Common myeloid progenitor, CD34-positive (primary cell): ENCODE measurements at regions of chr1 and their contacts with region 1.

Region 1: GRCh38 chr1:201895913-201896807 is 7.5 kb downstream of the SHISA4 start:
- DNase-seq: peak; percentile 89 to 93 (median 92)
- H3K4me3 ChIP-seq: peak overlapping the region in 1 of 7 experiments; percentile 60
- H3K27ac ChIP-seq: no peak overlapping the region
- H3K4me1 ChIP-seq: peaks cover 0 to 3% (median 0%) of the 10 kb centered on the region in 4 experiments
- H3K27me3 ChIP-seq: peaks cover 0 to 10% (median 2%) of the 10 kb centered on the region in 5 experiments

Region 2: DNA sequence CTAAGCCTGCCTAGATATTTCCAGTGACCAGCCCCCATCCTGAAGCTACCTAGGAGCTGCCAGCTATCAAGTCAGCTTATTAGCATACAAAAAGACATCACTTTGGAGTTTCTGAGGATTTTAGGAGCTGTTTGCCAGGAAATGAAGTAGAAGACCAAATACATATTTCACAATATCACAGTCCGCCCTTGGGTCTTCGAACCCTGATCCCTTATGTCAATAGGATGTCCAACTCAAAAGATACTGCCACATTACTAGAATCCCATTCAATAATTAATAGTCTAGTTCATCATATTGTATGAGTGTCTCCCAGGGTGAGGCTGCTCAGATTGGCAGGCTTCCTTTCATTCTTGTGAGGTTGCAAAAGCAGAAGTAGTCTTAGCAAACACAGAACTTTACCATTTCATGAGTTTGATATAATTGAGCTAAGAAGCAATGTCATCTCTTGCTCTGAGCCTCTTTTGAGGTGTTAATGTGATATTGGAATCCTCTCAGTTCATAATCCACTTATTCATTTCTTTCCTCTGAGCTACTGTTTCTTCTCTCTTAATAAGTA is 53.6 kb before region 1 on chr1:
- CTCF ChIA-PET with region 1: interaction called, 10 read pairs
- POLR2A ChIA-PET with region 1: no interaction called
- DNase-seq: peak; percentile 17 to 75 (median 70)
- H3K4me3 ChIP-seq: no peak overlapping the region
- H3K27ac ChIP-seq: no peak overlapping the region
- H3K4me1 ChIP-seq: peaks cover 3 to 16% (median 8%) of the 10 kb centered on the region in 4 experiments
- H3K27me3 ChIP-seq: no peaks in the 10 kb centered on the region

Region 3: GRCh38 chr1:201877877-201878401 is 18.2 kb before region 1 on chr1:
- CTCF ChIA-PET with region 1: interaction called, 156 read pairs
- POLR2A ChIA-PET with region 1: interaction called, 5 read pairs
- DNase-seq: peak; percentile 52 to 79 (median 73)
- H3K4me3 ChIP-seq: no peak overlapping the region
- H3K27ac ChIP-seq: no peak overlapping the region
- H3K4me1 ChIP-seq: peaks cover 2 to 27% (median 12%) of the 10 kb centered on the region in 4 experiments
- H3K27me3 ChIP-seq: no peaks in the 10 kb centered on the region

Region 4: DNA sequence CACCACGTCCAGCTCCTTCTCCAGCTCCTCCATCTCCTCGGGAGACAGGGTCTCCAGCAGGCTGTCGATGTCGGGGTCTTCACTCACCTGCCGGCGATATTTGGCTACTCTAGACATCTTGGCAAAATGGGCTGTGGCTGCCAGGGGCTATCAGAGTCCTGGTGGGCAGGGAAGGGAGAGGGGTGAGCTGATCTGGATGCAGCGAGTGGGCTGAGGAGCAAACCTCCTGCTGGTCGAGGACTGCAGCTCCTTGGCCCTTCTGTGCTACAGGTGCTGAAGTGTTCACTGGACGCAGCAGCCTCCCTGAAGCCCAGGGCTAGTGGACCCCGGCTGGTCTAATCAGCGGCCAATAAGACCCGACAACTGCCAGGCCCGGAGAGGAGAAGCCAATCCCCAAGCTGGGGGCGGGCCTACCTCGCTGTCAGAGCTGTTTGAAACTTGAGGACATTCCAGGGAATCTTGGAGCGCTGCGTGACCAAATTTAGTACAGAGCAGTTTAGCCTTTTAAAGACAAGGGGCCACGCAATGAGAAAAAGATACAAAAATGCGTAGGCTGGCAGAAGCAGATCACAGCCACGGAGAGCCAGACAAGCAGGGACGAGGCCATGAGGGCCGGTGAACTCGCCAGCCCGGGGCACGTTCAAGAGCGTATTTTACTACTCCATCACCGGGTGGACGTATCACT is 50.2 kb after region 1 on chr1 and contains the start of gene LMOD1:
- CTCF ChIA-PET with region 1: interaction called, 45 read pairs
- POLR2A ChIA-PET with region 1: no interaction called
- DNase-seq: peak in 1 of 3 donors; percentile 23
- H3K4me3 ChIP-seq: peak within 1 kb of the TSS in 5 of 7 experiments; percentile 48 to 66 (median 57)
- H3K27ac ChIP-seq: no peak within 1 kb of the TSS
- H3K4me1 ChIP-seq: peaks cover 0 to 12% (median 9%) of the 10 kb centered on the region in 4 experiments
- H3K27me3 ChIP-seq: peaks cover 12 to 45% (median 22%) of the 10 kb centered on the region in 5 experiments

Region 5: GRCh38 chr1:201955009-201955728 is 59.0 kb after region 1 on chr1 and contains the start of gene TIMM17A:
- CTCF ChIA-PET with region 1: interaction called, 10 read pairs
- POLR2A ChIA-PET with region 1: no interaction called
- DNase-seq: peak; percentile 97 to 99 (median 98)
- H3K4me3 ChIP-seq: peak within 1 kb of the TSS; percentile 79 to 100 (median 99)
- H3K27ac ChIP-seq: peak within 1 kb of the TSS; percentile 93 to 96
- H3K4me1 ChIP-seq: peaks cover 4 to 16% (median 11%) of the 10 kb centered on the region in 4 experiments
- H3K27me3 ChIP-seq: no peaks in the 10 kb centered on the region

Region 6: GRCh38 chr1:201964261-201964660 is 68.1 kb after region 1 on chr1:
- CTCF ChIA-PET with region 1: interaction called, 64 read pairs
- POLR2A ChIA-PET with region 1: no interaction called
- DNase-seq: no peak
- H3K4me3 ChIP-seq: no peak overlapping the region
- H3K27ac ChIP-seq: no peak overlapping the region
- H3K4me1 ChIP-seq: no peaks in the 10 kb centered on the region
- H3K27me3 ChIP-seq: no peaks in the 10 kb centered on the region

Region 7: DNA sequence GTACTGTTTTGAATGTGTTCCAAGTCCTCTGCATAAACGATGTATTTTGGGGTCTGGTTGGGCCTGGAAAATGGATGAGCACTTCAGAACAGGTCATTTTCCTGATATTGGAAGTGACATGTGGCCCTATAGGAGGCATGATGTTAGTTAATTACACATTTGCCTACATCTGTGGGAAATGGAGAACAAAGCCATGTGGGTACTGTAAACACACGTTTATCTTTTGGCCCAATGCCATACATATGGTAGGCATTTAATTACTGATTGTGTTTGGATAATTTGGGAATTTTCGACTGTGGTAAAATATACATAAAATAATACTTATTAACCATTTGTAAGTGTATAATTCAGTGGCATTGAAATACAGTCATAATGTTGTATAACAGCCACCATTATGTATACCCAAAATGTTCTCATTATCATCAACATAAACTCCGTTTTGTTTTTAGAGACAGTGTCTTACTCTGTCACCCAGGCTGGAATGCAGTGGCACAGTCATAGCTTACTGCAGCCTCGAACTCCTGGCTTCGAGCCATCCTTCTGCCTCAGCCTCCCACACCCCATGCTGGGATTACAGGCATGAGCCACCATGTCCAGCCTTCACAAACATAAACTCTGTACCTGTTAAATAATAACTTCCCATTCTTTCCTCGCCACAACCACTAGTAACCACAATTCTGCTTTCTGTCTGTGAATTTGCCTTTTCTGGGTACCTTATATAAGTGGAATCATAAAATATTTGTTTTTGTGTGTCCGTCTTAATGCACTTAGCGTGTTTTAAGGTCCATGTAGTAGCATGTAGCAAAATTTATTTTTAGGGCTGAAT is 74.4 kb after region 1 on chr1:
- CTCF ChIA-PET with region 1: interaction called, 142 read pairs
- POLR2A ChIA-PET with region 1: interaction called, 6 read pairs
- DNase-seq: no peak
- H3K4me3 ChIP-seq: no peak overlapping the region
- H3K27ac ChIP-seq: no peak overlapping the region
- H3K4me1 ChIP-seq: peaks cover 0 to 2% (median 0%) of the 10 kb centered on the region in 4 experiments
- H3K27me3 ChIP-seq: no peaks in the 10 kb centered on the region

Region 8: GRCh38 chr1:202046227-202046801 is 150.2 kb after region 1 on chr1:
- CTCF ChIA-PET with region 1: no interaction called
- POLR2A ChIA-PET with region 1: no interaction called
- DNase-seq: no peak
- H3K4me3 ChIP-seq: no peak overlapping the region
- H3K27ac ChIP-seq: no peak overlapping the region
- H3K4me1 ChIP-seq: no peaks in the 10 kb centered on the region
- H3K27me3 ChIP-seq: peaks cover 0 to 2% (median 0%) of the 10 kb centered on the region in 5 experiments

Region 9: GRCh38 chr1:202056644-202057461 is 160.7 kb after region 1 on chr1:
- CTCF ChIA-PET with region 1: no interaction called
- POLR2A ChIA-PET with region 1: no interaction called
- DNase-seq: no peak
- H3K4me3 ChIP-seq: no peak overlapping the region
- H3K27ac ChIP-seq: no peak overlapping the region
- H3K4me1 ChIP-seq: no peaks in the 10 kb centered on the region
- H3K27me3 ChIP-seq: no peaks in the 10 kb centered on the region